ENCODE measurements at regions of chr13 and their contacts with region 1.

Region 1: DNA sequence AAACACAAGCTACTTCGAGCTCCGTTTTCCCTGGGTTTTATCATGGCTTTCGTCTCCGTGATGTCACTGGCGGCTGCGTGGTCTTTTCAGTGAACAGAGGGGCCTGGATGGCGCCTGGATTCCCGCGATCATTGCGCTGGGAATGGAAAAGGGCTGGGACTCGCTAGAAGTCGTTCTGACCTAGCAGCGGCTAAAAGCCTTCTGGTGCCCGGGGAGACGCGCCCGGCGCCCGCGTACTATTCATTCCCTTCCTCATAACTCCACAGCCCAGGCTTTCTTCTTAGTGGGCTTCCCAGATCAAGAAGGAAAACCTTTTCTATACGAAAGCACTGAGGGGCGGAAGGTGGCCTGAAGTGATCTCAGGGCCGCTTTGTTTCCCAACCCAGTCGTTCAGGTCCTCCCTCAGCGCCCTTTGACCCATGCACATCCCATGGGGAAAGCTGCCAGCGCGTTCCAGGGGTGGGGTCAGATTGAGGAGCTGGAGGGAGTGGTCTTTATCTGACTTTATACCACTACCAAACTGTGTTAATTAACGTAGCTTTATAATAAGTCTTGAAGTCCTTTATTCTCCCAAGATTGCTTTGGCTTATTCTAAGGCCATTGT is 96.6 kb downstream of the ELF1 start:
- DNase-seq: no peak
- ATAC-seq: no peak

Region 2: GRCh38 chr13:41054212-41054877 is 131.8 kb after region 1 on chr13:
- intact Hi-C with region 1: loop called (anchors 10 kb)
- DNase-seq: no peak
- ATAC-seq: peak; percentile 54

Region 3: DNA sequence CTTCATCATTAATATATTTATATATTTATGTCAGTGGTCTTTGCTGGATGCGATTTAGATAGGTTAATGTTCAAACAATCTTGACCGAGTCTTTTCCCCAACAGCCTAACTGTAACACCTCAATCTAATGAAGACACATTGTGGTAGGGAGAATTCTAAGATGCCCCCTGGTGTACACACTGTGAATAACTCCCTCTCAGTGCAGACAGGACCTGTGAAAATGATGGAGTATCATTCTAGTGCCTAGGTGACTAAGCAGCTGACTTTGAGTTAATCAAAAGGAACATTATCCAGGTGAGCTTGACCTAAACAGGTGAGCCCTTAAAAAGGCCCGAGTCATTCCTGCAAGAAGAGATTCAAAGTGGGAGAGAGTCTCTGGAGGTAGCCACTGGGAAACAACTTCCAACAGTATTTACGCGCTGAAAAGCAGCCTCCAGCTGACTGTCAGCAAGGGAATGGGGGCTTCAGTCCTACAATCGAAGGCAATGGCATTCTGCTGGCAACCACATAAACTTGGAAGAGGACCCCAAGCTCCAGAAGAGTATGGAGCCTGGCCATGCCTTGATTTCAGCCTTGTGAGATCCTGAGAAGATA is 299.8 kb after region 1 on chr13:
- intact Hi-C with region 1: no loop called
- DNase-seq: no peak
- ATAC-seq: peak; percentile 90

Measured in Right ventricle myocardium superior (tissue), 1 donor.